Upper lobe of right lung (tissue), 1 donor: ENCODE measurements at regions of chr6 and their contacts with region 1.

Region 1: DNA sequence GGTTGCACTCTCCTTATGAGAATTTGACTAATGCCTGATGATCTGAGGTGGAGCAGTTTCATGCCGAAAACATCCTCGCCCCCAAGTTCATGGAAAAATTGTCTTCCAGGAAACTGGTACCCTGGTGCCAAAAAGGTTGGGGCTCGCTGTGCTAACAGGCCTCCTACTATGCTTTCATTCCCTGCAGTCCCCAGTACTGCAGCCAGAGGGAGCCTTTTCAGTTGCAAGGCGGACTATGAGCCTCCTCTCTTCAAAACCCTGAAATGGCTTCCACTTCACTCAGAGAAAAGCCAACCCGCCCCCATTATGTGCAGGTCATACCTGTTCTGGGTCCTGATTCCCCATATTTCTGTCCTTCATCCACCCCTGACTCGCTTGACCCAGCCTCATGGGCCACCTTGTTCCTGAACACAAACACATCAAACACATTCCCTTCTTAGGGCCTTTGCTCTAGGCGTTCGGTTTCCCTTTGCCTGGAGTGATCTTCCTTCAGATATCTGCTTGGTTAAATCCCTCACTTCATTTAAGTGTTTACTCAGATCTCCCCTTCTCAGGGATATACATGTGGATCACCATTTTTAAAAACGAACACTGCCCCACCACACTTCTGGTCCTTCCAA is 173.7 kb downstream of the PHACTR1 start:
- DNase-seq: no peak
- ATAC-seq: peak; percentile 54
- H3K4me3 ChIP-seq: no peak overlapping the region
- H3K27ac ChIP-seq: no peak overlapping the region
- H3K4me1 ChIP-seq: no peaks in the 10 kb centered on the region
- H3K27me3 ChIP-seq: no peaks in the 10 kb centered on the region
- CTCF ChIP-seq: peak; percentile 55

Region 2: DNA sequence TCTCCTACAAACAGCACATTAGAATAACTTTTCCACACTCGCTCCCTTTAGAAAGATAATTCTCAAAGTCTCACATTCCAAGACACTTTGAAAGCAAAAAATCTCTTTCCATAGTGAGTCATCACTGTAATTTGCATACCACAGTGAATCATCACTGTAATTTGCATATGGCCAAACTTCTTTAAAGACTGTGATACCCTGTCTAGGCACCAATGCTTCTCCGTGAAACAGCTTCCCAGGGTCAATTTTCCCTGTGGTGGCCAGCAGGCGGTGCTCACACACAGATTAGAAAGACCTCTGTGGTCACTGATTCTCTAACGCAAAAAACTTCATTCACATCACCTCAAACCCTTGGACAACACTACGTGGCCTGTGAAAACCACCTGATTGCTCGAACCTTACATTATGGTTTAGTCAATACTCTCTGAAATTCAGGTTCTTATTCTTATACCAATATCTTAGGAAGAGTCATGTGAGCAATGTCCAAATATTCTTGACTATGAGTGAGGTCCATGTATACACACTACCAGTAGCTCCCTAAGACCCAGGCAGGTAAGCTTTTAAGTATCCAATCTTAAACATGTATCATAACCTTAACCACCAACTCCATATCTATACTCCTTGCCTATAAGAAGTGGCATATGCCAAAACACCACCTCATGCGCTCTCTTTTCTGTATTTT is 252.2 kb before region 1 on chr6:
- intact Hi-C with region 1: loop called (anchors 10 kb)
- DNase-seq: peak; percentile 81
- ATAC-seq: peak; percentile 91
- H3K4me3 ChIP-seq: no peak overlapping the region
- H3K27ac ChIP-seq: no peak overlapping the region
- H3K4me1 ChIP-seq: no peaks in the 10 kb centered on the region
- H3K27me3 ChIP-seq: no peaks in the 10 kb centered on the region
- CTCF ChIP-seq: peak; percentile 72